Mammary epithelial cell (primary cell): ENCODE measurements at regions of chr1 and their contacts with region 1.

Region 1: DNA sequence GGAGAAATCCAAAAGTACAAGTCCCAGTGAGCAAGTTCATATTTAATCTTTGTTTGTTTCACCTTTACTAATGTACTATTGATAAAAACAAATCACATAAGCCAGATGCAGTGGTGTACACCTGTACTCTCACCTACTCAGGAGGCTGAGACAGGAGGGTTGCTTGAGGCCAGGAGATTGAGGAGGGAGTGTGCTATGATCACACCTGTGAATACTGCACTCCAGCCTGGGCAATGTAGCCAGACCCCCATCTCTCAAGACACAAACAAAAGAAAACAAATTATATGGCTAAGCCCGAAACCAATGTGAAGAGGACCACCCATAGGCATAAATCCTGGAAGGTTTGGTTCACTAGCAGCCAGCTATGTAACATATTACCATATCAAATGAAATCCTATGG is 9.6 kb upstream of the USP24 start:
- DNase-seq: no peak
- H3K4me3 ChIP-seq: no peak overlapping the region
- H3K27ac ChIP-seq: no peak overlapping the region
- H3K4me1 ChIP-seq: no peaks in the 10 kb centered on the region
- H3K27me3 ChIP-seq: peaks cover 4% of the 10 kb centered on the region
- CTCF ChIP-seq: no peak

Region 2: DNA sequence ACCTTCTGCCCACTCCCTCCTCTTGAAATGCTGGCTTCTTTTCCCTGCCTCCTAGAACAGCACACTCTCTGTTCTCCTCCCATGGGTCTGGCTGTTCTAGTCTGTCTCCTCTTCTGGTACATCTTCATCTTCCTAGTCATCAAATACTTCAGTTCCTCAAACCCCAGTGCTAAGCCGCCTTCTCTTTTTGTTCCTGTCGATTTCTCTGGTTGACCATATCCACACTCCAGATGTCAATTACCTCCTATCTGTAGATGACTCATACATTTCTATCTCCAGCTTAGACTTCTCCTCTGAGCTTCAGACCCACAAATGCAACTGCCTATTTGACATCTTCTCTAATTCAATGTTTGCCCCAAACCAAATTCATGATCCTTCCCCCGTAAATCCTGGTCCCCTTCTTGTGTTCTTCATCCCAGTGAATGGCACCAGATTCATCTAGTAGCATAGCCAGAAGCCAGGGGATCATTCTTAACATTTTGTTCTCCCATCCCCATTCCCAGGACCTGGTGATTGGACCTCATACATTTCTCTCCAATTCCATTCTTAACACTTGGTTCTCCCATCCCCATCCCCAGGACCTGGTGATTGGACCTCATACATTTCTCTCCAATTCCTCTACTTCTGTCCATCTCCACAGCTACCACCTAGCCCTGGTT is 45.4 kb before region 1 on chr1:
- CTCF ChIA-PET with region 1: interaction called, 18 read pairs
- dilution Hi-C with region 1: no loop called
- in situ Hi-C with region 1: no loop called
- intact Hi-C with region 1: no loop called
- DNase-seq: no peak
- H3K4me3 ChIP-seq: no peak overlapping the region
- H3K27ac ChIP-seq: no peak overlapping the region
- H3K4me1 ChIP-seq: peaks cover 2% of the 10 kb centered on the region
- H3K27me3 ChIP-seq: no peaks in the 10 kb centered on the region
- CTCF ChIP-seq: no peak